ENCODE measurements at regions of chr1 and their contacts with region 1.

Region 1: DNA sequence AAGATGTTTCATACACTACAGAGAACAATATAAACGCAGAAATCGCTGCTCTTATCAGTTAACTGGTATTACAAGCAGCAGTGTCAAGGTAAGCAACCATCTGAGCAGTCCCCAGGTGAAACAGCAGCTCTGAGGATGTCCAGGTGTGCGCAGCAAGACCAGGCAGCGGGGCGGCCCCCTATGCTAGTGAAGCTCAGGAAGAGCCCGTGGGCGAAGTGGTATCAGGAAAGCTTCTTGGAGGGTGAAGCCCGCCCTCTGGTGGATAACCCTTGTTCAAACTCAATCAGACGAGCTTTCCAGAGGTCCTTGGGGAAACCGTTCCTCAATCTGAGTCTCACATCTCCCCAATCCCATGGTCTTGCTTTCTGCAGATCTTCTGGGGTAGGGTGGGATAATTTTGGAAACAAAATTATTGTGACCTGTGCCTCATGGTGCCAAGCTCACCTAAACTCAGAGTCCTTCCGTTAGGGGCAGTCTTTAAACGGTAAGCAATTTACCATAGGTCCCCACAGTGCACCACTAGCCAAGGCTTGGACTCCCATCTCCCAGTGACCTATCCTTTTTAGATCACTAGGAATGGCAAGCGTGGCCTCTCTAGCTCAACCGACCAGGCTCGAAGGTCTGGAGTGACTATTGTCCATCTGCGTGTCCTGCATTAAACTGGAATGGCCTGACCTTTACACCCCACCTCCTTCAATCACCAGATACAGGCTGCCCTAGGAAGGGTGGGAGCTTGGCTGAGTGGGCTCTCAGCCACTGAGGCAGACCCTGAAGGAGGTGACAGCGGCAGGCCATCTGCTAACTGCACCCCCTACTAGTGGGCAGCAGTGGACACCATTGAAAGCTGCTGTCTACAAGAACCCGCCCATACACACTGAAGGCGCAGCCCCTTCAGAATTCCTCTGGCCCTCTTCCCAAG is 13.6 kb upstream of the FAM110D start:
- DNase-seq: peak; percentile 90
- ATAC-seq: peak; percentile 98
- H3K4me3 ChIP-seq: no peak overlapping the region
- H3K27ac ChIP-seq: no peak overlapping the region
- H3K4me1 ChIP-seq: no peaks in the 10 kb centered on the region
- H3K27me3 ChIP-seq: no peaks in the 10 kb centered on the region
- CTCF ChIP-seq: peak; percentile 86

Region 2: GRCh38 chr1:25858906-25859789 is 286.2 kb before region 1 on chr1 and contains the start of gene AUNIP:
- CTCF ChIA-PET with region 1: no interaction called
- POLR2A ChIA-PET with region 1: interaction called, 22 read pairs
- intact Hi-C with region 1: no loop called
- DNase-seq: peak; percentile 93
- ATAC-seq: peak; percentile 84
- H3K4me3 ChIP-seq: peak within 1 kb of the TSS; percentile 79
- H3K27ac ChIP-seq: peak within 1 kb of the TSS; percentile 45
- H3K4me1 ChIP-seq: 0 out of 2 replicates have a peak, but pooled peaks cover 7% of the 10 kb centered on the region
- H3K27me3 ChIP-seq: no peaks in the 10 kb centered on the region
- CTCF ChIP-seq: no peak
- total RNA-seq, gene AUNIP: 17.6 and 22.2 TPM in 2 replicates

Region 3: GRCh38 chr1:26027716-26028489 is 117.4 kb before region 1 on chr1:
- CTCF ChIA-PET with region 1: interaction called, 12 read pairs
- POLR2A ChIA-PET with region 1: no interaction called
- intact Hi-C with region 1: no loop called
- DNase-seq: no peak
- ATAC-seq: no peak
- H3K4me3 ChIP-seq: no peak overlapping the region
- H3K27ac ChIP-seq: no peak overlapping the region
- H3K4me1 ChIP-seq: no peaks in the 10 kb centered on the region
- H3K27me3 ChIP-seq: no peaks in the 10 kb centered on the region
- CTCF ChIP-seq: no peak

Region 4: DNA sequence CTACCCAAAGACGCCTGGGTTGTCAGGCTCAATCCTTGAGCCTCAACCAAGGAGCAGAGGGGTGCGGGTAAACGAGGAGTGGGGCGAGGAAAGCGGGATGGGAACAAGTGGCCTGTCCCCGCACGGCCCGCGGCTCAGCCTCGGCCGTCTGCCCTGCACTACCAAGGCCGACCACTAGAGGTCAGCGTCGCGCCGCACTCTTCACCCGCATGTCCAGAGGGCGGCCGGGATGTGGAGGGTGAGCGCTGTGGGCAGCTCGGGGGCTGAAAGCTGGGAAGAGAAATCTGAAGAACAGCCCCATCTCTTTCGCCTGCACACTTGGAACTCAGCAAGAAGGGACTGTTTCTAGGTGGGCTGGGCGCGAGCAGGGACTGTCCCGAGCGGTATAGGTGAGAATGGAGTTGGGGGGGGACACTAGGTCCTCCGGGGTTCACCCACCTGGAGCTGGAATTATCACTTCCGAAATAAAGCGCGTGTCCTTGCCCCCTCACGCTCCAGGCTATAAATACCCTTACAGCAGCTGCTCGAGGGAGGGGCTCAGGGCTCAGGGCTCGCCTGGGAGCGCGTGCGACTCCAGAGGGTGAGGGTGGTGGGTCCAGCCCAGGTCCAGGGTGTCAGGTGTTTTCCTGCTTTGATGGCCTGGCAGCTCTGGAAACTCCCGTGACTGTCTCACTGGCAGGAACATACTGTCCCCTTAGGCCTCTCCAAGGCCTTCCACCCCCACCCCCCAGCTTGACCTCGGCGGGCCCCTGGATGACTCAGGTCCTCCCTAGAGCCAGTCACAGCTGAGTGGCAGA is 109.1 kb before region 1 on chr1:
- CTCF ChIA-PET with region 1: interaction called, 27 read pairs
- POLR2A ChIA-PET with region 1: no interaction called
- intact Hi-C with region 1: loop called (anchors 1 kb)
- DNase-seq: peak; percentile 83
- ATAC-seq: peak; percentile 82
- H3K4me3 ChIP-seq: peak overlapping the region; percentile 80
- H3K27ac ChIP-seq: 0 out of 2 replicates have a peak overlapping the region, but pooled peaks have one; percentile 7
- H3K4me1 ChIP-seq: peaks cover 14% of the 10 kb centered on the region
- H3K27me3 ChIP-seq: no peaks in the 10 kb centered on the region
- CTCF ChIP-seq: peak; percentile 96

Region 5: GRCh38 chr1:26102526-26102925 is 42.8 kb before region 1 on chr1:
- CTCF ChIA-PET with region 1: interaction called, 19 read pairs
- POLR2A ChIA-PET with region 1: no interaction called
- intact Hi-C with region 1: loop called (anchors 1 kb)
- DNase-seq: no peak
- ATAC-seq: no peak
- H3K4me3 ChIP-seq: no peak overlapping the region
- H3K27ac ChIP-seq: no peak overlapping the region
- H3K4me1 ChIP-seq: peaks cover 12% of the 10 kb centered on the region
- H3K27me3 ChIP-seq: no peaks in the 10 kb centered on the region
- CTCF ChIP-seq: no peak

Region 6: GRCh38 chr1:26126321-26127084 is 18.8 kb before region 1 on chr1:
- CTCF ChIA-PET with region 1: interaction called, 6 read pairs
- POLR2A ChIA-PET with region 1: no interaction called
- intact Hi-C with region 1: loop called (anchors 2 kb)
- DNase-seq: peak; percentile 92
- ATAC-seq: peak; percentile 72
- H3K4me3 ChIP-seq: peak overlapping the region; percentile 31
- H3K27ac ChIP-seq: peak overlapping the region; percentile 94
- H3K4me1 ChIP-seq: peaks cover 63% of the 10 kb centered on the region
- H3K27me3 ChIP-seq: no peaks in the 10 kb centered on the region
- CTCF ChIP-seq: no peak

Region 7: GRCh38 chr1:26190373-26190987 is 45.2 kb after region 1 on chr1 and contains the start of gene CATSPER4:
- CTCF ChIA-PET with region 1: no interaction called
- POLR2A ChIA-PET with region 1: no interaction called
- intact Hi-C with region 1: no loop called
- DNase-seq: no peak
- ATAC-seq: no peak
- H3K4me3 ChIP-seq: no peak within 1 kb of the TSS
- H3K27ac ChIP-seq: no peak within 1 kb of the TSS
- H3K4me1 ChIP-seq: no peaks in the 10 kb centered on the region
- H3K27me3 ChIP-seq: no peaks in the 10 kb centered on the region
- CTCF ChIP-seq: no peak
- total RNA-seq, gene CATSPER4: not detected in 2 replicates